ENCODE measurements at regions of chr2 and their contacts with region 1.

Region 1: GRCh38 chr2:188695953-188696352 is 278.2 kb upstream of the COL3A1 start:
- DNase-seq: no peak
- H3K4me3 ChIP-seq: no peak overlapping the region
- H3K27ac ChIP-seq: no peak overlapping the region
- H3K4me1 ChIP-seq: peaks cover 19% of the 10 kb centered on the region
- H3K27me3 ChIP-seq: no peaks in the 10 kb centered on the region
- CTCF ChIP-seq: no peak

Region 2: GRCh38 chr2:188588235-188588634 is 107.7 kb before region 1 on chr2:
- CTCF ChIA-PET with region 1: no interaction called
- POLR2A ChIA-PET with region 1: interaction called, 10 read pairs
- intact Hi-C with region 1: no loop called
- DNase-seq: no peak
- H3K4me3 ChIP-seq: no peak overlapping the region
- H3K27ac ChIP-seq: no peak overlapping the region
- H3K4me1 ChIP-seq: no peaks in the 10 kb centered on the region
- H3K27me3 ChIP-seq: no peaks in the 10 kb centered on the region
- CTCF ChIP-seq: no peak

Region 3: DNA sequence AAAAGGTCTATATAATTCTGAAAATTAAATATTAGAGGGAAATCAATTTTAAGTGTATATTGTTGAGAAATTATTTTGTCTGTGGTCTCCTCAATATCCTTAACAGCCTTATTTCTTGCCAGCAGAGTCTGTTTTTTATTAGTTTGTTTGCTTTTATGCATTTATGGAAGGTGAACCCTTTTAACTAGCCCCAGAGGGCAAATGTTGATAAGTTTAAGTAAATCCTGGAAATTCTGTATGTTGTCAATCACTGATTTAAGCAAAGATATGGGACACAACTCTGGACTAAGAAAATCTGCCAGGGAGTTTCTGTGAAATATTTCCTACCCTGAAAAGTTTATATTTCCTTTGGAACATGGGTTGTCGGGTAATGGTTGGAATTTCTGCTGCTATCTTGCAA is 61.3 kb before region 1 on chr2:
- CTCF ChIA-PET with region 1: no interaction called
- POLR2A ChIA-PET with region 1: no interaction called
- intact Hi-C with region 1: no loop called
- DNase-seq: no peak
- H3K4me3 ChIP-seq: no peak overlapping the region
- H3K27ac ChIP-seq: no peak overlapping the region
- H3K4me1 ChIP-seq: no peaks in the 10 kb centered on the region
- H3K27me3 ChIP-seq: no peaks in the 10 kb centered on the region
- CTCF ChIP-seq: no peak